PC-9 (cell line): ENCODE measurements at regions of chr3 and their contacts with region 1.

Region 1: GRCh38 chr3:181700168-181701087 is 11.3 kb upstream of the SOX2 start:
- DNase-seq: peak; percentile 50 to 75
- H3K4me3 ChIP-seq: peak overlapping the region; percentile 29; the same call in 1 of the 2 replicates
- H3K27ac ChIP-seq: no peak overlapping the region
- H3K4me1 ChIP-seq: peaks cover 5% of the 10 kb centered on the region; the same call in 1 of the 2 replicates
- H3K27me3 ChIP-seq: peaks cover 29% of the 10 kb centered on the region; the same call in 1 of the 2 replicates
- CTCF ChIP-seq: peak; percentile 96

Region 2: DNA sequence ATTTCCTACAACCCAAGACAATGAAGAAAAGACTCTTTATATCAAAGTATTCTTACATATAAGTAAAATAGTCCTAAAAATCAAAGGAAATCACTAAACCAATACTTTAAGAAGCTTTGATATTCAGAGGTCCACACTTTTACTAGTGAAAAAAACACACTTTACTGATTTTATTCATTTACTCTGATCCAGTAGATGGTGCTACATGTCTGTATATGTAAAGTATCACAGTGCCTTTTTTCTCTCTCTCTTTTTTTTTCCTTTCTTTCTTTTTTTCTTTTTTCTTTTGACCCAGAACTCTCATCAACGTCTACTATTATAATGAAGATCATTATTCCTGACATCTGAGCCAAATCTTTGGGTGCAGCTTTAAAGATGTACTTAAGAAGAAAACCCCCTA is 1010.4 kb before region 1 on chr3:
- CTCF ChIA-PET with region 1: interaction called, 3 read pairs
- POLR2A ChIA-PET with region 1: no interaction called
- intact Hi-C with region 1: loop called (anchors 5 kb)
- DNase-seq: no peak
- H3K4me3 ChIP-seq: no peak overlapping the region
- H3K27ac ChIP-seq: no peak overlapping the region
- H3K4me1 ChIP-seq: no peaks in the 10 kb centered on the region
- H3K27me3 ChIP-seq: no peaks in the 10 kb centered on the region
- CTCF ChIP-seq: peak; percentile 46; the same call in 1 of the 2 replicates

Region 3: DNA sequence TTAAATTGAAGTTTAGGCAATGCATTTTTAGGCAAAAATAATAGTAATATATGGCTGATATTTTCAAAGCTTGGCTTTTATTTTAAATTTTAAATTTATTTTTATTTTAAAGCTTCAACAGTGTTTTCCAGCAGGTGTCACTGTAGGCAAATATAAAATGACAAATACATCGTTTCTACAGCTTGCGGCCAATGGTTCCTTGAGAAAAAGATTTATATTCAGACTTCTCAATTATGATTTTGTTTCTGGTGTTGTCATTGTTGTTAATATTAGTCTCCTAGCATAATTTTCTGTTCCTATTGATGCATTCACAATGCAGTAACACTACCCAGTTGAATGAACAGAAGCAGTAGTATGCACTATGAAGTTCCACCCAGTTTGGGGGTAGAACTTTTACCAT is 490.2 kb before region 1 on chr3:
- CTCF ChIA-PET with region 1: interaction called, 3 read pairs
- POLR2A ChIA-PET with region 1: no interaction called
- intact Hi-C with region 1: loop called (anchors 1 kb)
- DNase-seq: no peak
- H3K4me3 ChIP-seq: no peak overlapping the region
- H3K27ac ChIP-seq: no peak overlapping the region
- H3K4me1 ChIP-seq: no peaks in the 10 kb centered on the region
- H3K27me3 ChIP-seq: no peaks in the 10 kb centered on the region
- CTCF ChIP-seq: peak; percentile 72

Region 4: GRCh38 chr3:181326637-181327223 is 373.7 kb before region 1 on chr3:
- CTCF ChIA-PET with region 1: interaction called, 10 read pairs
- POLR2A ChIA-PET with region 1: no interaction called
- intact Hi-C with region 1: loop called (anchors 1 kb)
- DNase-seq: no peak
- H3K4me3 ChIP-seq: no peak overlapping the region
- H3K27ac ChIP-seq: no peak overlapping the region
- H3K4me1 ChIP-seq: no peaks in the 10 kb centered on the region
- H3K27me3 ChIP-seq: no peaks in the 10 kb centered on the region; the same call in 1 of the 2 replicates
- CTCF ChIP-seq: peak; percentile 94

Region 5: DNA sequence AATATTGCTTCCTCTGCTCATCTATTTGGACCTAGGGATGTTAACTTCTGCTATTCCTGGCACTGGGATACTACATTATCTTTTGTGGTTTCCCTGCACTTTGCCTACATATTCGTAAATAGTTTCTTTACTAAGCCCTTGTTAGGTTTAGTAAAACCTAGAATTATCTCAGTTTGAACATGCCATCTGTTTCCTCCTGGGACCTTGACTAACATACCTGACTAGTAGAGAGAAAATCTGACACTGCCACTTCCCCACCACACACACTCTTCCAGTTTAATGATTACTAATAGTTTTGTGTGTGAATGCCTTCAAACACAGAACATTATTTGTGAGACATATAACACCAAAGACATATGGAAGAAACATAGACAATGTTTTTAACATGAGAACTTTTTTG is 16.9 kb before region 1 on chr3:
- CTCF ChIA-PET with region 1: no interaction called
- POLR2A ChIA-PET with region 1: no interaction called
- intact Hi-C with region 1: no loop called
- DNase-seq: no peak
- H3K4me3 ChIP-seq: no peak overlapping the region
- H3K27ac ChIP-seq: no peak overlapping the region
- H3K4me1 ChIP-seq: no peaks in the 10 kb centered on the region
- H3K27me3 ChIP-seq: no peaks in the 10 kb centered on the region
- CTCF ChIP-seq: no peak

Region 6: DNA sequence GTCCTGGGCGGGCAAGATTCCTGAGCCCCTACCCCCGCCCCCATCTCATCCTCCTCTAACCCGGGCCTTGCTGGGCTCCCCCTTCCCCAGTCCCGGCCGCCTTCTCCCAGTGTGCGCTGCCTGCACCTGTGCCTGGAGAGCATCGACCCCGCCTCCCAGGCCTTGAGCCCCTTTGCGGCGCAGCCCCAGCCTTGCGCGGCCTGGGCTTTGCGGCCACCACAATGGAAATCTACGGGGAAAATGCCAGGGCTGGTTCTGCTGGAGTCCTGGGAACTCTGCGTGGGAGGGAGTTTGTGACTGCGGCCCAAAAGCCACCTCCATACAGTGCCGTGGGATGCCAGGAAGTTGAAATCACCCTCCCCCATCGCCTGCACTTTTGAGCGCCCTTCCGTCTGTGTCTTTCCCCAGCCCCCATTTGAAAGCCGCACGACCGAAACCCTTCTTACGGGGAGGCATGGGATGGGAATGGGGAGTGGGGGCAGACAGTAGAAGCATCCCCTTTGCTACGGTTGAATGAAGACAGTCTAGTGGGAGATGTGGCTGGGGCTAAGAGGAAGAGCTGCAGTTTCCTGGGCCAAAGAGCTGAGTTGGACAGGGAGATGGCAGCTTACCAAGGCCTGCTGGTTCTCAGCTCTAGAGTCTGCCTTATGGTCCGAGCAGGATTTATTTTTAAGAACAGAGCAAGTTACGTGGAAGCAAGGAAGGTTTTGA is 10.3 kb after region 1 on chr3:
- CTCF ChIA-PET with region 1: no interaction called
- POLR2A ChIA-PET with region 1: no interaction called
- intact Hi-C with region 1: no loop called
- DNase-seq: peak in 1 of 2 experiments; percentile 13
- H3K4me3 ChIP-seq: peak overlapping the region; percentile 67; the same call in 1 of the 2 replicates
- H3K27ac ChIP-seq: no peak overlapping the region
- H3K4me1 ChIP-seq: peaks cover 20% of the 10 kb centered on the region
- H3K27me3 ChIP-seq: peaks cover 23% of the 10 kb centered on the region
- CTCF ChIP-seq: no peak

Region 7: GRCh38 chr3:181721046-181721875 is 20.8 kb after region 1 on chr3:
- CTCF ChIA-PET with region 1: no interaction called
- POLR2A ChIA-PET with region 1: no interaction called
- intact Hi-C with region 1: no loop called
- DNase-seq: no peak
- H3K4me3 ChIP-seq: no peak overlapping the region
- H3K27ac ChIP-seq: no peak overlapping the region
- H3K4me1 ChIP-seq: no peaks in the 10 kb centered on the region
- H3K27me3 ChIP-seq: peaks cover 21% of the 10 kb centered on the region
- CTCF ChIP-seq: no peak

Region 8: DNA sequence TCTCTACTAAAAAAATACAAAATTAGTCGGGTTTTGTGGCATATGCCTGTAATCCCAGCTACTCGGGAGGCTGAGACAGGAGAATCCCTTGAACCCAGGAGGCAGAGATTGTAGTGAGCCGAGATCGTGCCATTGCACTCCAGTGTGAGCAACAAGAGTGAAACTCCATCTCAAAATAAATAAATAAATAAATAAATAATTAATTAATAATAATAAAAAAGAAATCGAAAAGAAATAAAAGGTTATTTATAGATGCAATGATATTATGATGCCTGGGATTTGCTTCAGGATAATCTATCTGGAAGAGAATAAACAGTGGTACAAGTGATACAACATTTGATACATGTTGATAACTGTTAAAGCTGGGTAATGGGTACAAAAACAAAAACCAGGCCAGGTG is 69.9 kb after region 1 on chr3:
- CTCF ChIA-PET with region 1: interaction called, 13 read pairs
- POLR2A ChIA-PET with region 1: no interaction called
- intact Hi-C with region 1: no loop called
- DNase-seq: no peak
- H3K4me3 ChIP-seq: no peak overlapping the region
- H3K27ac ChIP-seq: no peak overlapping the region
- H3K4me1 ChIP-seq: no peaks in the 10 kb centered on the region
- H3K27me3 ChIP-seq: no peaks in the 10 kb centered on the region
- CTCF ChIP-seq: no peak